ENCODE measurements at regions of chr5 and their contacts with region 1.

Region 1: GRCh38 chr5:157148734-157149615 is 6.3 kb upstream of the MED7 start:
- DNase-seq: no peak
- ATAC-seq: peak; percentile 81
- H3K4me3 Mint-ChIP-seq: no peak overlapping the region
- H3K27ac Mint-ChIP-seq: no peak overlapping the region
- H3K4me1 Mint-ChIP-seq: peaks cover 8% of the 10 kb centered on the region
- H3K27me3 Mint-ChIP-seq: no peaks in the 10 kb centered on the region
- CTCF ChIP-seq: peak; percentile 45

Region 2: GRCh38 chr5:157172403-157172802 is 23.4 kb after region 1 on chr5:
- CTCF ChIA-PET with region 1: interaction called, 5 read pairs
- POLR2A ChIA-PET with region 1: no interaction called
- intact Hi-C with region 1: loop called (anchors 1 kb)
- DNase-seq: peak; percentile 44
- ATAC-seq: peak; percentile 96
- H3K4me3 Mint-ChIP-seq: peak overlapping the region; percentile 62
- H3K27ac Mint-ChIP-seq: peak overlapping the region; percentile 86
- H3K4me1 Mint-ChIP-seq: peaks cover 30% of the 10 kb centered on the region
- H3K27me3 Mint-ChIP-seq: no peaks in the 10 kb centered on the region
- CTCF ChIP-seq: no peak

Region 3: GRCh38 chr5:157219491-157220271 is 70.7 kb after region 1 on chr5:
- CTCF ChIA-PET with region 1: no interaction called
- POLR2A ChIA-PET with region 1: no interaction called
- intact Hi-C with region 1: loop called (anchors 1 kb)
- DNase-seq: no peak
- ATAC-seq: no peak
- H3K4me3 Mint-ChIP-seq: no peak overlapping the region
- H3K27ac Mint-ChIP-seq: no peak overlapping the region
- H3K4me1 Mint-ChIP-seq: peaks cover 47% of the 10 kb centered on the region
- H3K27me3 Mint-ChIP-seq: no peaks in the 10 kb centered on the region
- CTCF ChIP-seq: no peak

Region 4: DNA sequence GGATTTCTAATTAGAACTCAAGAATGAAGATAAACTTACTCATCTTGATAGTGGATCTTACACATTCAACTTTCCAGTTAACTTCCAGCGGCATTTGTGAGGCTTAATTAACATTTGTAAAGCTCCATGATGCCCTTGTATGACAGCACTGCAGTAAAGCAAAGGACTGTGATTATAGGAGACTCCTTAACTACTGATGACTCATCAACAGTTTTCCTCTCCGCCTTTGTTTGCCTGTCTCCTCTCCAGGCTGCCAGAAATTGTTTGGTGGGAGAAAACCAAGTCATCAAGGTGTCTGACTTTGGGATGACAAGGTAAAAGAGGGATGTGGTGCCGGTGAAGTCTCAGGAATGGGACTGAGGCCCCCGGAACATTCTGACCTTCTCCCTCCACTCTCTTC is 96.5 kb after region 1 on chr5:
- CTCF ChIA-PET with region 1: interaction called, 105 read pairs
- POLR2A ChIA-PET with region 1: no interaction called
- intact Hi-C with region 1: no loop called
- DNase-seq: no peak
- ATAC-seq: no peak
- H3K4me3 Mint-ChIP-seq: no peak overlapping the region
- H3K27ac Mint-ChIP-seq: no peak overlapping the region
- H3K4me1 Mint-ChIP-seq: peaks cover 11% of the 10 kb centered on the region
- H3K27me3 Mint-ChIP-seq: no peaks in the 10 kb centered on the region
- CTCF ChIP-seq: no peak

Region 5: DNA sequence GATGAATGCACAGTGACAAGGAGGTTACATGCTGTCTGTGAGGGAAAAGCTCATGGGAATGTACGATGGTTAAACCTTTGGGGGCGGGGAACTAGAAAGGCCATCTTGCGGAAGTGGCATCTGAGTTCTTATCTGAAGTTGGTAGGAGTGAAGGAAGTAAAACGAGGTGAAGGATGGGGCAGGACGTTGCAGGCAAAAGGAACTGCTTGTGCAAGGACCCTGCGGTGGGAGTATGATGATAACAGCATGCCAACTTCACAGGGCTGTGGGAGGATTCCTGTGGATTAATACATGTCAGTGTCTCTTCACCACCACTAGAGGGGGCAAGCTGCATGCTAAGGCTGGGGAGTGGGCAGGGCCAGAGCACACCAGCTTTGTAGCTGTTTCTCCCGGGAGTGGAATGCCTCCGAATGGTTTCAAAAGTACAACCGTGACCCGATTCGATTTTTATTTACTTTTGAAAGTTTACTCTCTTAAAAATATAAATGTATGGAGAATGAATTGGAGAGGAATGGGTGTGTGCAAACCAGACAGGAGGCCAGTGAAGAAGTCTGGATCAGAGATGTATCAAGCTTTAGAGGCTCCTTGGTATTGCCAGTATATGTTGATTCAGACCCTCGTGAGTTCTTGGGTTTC is 179.4 kb after region 1 on chr5:
- CTCF ChIA-PET with region 1: interaction called, 9 read pairs
- POLR2A ChIA-PET with region 1: no interaction called
- intact Hi-C with region 1: loop called (anchors 1 kb)
- DNase-seq: no peak
- ATAC-seq: peak; percentile 100
- H3K4me3 Mint-ChIP-seq: no peak overlapping the region
- H3K27ac Mint-ChIP-seq: peak overlapping the region; percentile 36
- H3K4me1 Mint-ChIP-seq: peaks cover 6% of the 10 kb centered on the region
- H3K27me3 Mint-ChIP-seq: no peaks in the 10 kb centered on the region
- CTCF ChIP-seq: peak; percentile 59

Measured in activated B cell treated with CpG ODN at 0.5 μM for 24 hours (primary cell).